Activated CD4-positive, alpha-beta T cell treated with anti-CD3 and anti-CD28 coated beads for 36 hours (primary cell): ENCODE measurements at regions of chr16 and their contacts with region 1.

Region 1: GRCh38 chr16:4271176-4272066 is 1.4 kb downstream of the TFAP4 start:
- DNase-seq: peak; percentile 96
- ATAC-seq: peak; percentile 85
- H3K4me3 Mint-ChIP-seq: peak overlapping the region; percentile 84
- H3K27ac Mint-ChIP-seq: peak overlapping the region; percentile 94
- H3K4me1 Mint-ChIP-seq: peaks cover 12% of the 10 kb centered on the region
- H3K27me3 Mint-ChIP-seq: no peaks in the 10 kb centered on the region

Region 2: GRCh38 chr16:3611146-3611975 is 660.1 kb before region 1 on chr16 and contains the start of gene SLX4:
- CTCF ChIA-PET with region 1: no interaction called
- POLR2A ChIA-PET with region 1: no interaction called
- intact Hi-C with region 1: loop called in 1 of 2 experiments (anchors 1 kb)
- DNase-seq: peak; percentile 95
- ATAC-seq: peak; percentile 90
- H3K4me3 Mint-ChIP-seq: peak within 1 kb of the TSS; percentile 100
- H3K27ac Mint-ChIP-seq: peak within 1 kb of the TSS; percentile 98
- H3K4me1 Mint-ChIP-seq: peaks cover 41% of the 10 kb centered on the region
- H3K27me3 Mint-ChIP-seq: no peaks in the 10 kb centered on the region
- total RNA-seq, gene SLX4: 10.7 to 11.7 TPM

Region 3: DNA sequence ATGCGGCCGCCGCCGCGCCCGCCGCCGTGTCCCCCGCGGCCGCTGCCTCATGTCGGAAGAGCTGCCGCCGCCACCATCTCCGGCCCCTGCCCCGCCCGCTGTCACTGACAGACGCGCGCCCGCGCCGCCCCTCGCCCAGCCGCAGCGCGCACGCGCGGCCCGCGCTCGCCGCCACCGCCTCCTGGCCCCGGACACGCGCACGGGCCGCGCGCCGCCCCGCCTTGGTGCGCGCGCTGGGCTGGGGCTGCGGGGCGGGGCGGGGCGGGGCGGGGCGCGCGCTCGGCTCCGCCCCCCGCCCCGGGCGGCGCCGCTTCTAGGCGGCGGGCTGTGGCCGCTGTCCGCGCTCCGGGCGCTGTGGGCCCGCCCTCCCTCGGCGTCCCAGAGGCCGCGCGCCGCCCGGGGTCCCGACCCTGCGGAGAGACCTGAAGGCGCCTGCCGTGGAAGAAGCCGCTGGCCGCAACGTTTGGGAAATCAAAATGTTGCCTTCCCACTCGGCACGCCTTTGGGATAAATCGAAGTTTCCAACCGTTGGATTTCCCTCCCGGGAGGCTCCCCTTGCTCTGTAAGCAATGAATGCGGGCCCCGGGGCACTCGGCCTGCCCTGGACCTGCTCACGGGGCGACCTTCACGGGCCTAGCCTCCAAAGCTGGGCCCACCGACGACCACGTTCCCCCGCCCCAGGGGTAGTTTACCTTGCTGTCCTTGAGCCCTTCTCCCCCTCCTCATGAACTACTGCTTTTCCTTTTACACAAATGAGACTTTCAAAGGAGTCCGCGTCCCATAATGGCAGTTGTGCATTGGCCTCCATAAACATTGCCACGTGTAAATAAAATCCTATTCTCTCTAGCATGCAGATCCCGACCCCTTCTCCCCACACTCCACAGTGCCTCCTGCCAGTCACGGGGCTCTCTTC is 154.8 kb before region 1 on chr16 and contains the start of gene ADCY9:
- CTCF ChIA-PET with region 1: no interaction called
- POLR2A ChIA-PET with region 1: no interaction called
- intact Hi-C with region 1: loop called in 1 of 2 experiments (anchors 1 kb)
- DNase-seq: peak; percentile 86
- ATAC-seq: peak; percentile 75
- H3K4me3 Mint-ChIP-seq: peak within 1 kb of the TSS; percentile 78
- H3K27ac Mint-ChIP-seq: peak within 1 kb of the TSS; percentile 78
- H3K4me1 Mint-ChIP-seq: peaks cover 36% of the 10 kb centered on the region
- H3K27me3 Mint-ChIP-seq: peaks cover 7% of the 10 kb centered on the region
- total RNA-seq, gene ADCY9: 5.3 to 6.2 TPM

Region 4: GRCh38 chr16:4330277-4330874 is 59.0 kb after region 1 on chr16:
- CTCF ChIA-PET with region 1: interaction called, 4 read pairs
- POLR2A ChIA-PET with region 1: no interaction called
- intact Hi-C with region 1: loop called in 1 of 2 experiments (anchors 5 kb)
- DNase-seq: peak; percentile 86
- ATAC-seq: peak; percentile 80
- H3K4me3 Mint-ChIP-seq: no peak overlapping the region
- H3K27ac Mint-ChIP-seq: no peak overlapping the region
- H3K4me1 Mint-ChIP-seq: no peaks in the 10 kb centered on the region
- H3K27me3 Mint-ChIP-seq: no peaks in the 10 kb centered on the region

Region 5: GRCh38 chr16:4416200-4417032 is 145.0 kb after region 1 on chr16 and contains the start of gene CORO7:
- CTCF ChIA-PET with region 1: no interaction called
- POLR2A ChIA-PET with region 1: no interaction called
- intact Hi-C with region 1: loop called in 1 of 2 experiments (anchors 1 kb)
- DNase-seq: peak; percentile 98
- ATAC-seq: peak; percentile 81
- H3K4me3 Mint-ChIP-seq: peak within 1 kb of the TSS; percentile 86
- H3K27ac Mint-ChIP-seq: peak within 1 kb of the TSS; percentile 84
- H3K4me1 Mint-ChIP-seq: peaks cover 29% of the 10 kb centered on the region
- H3K27me3 Mint-ChIP-seq: no peaks in the 10 kb centered on the region
- total RNA-seq, gene CORO7: 65.0 to 67.1 TPM

Region 6: DNA sequence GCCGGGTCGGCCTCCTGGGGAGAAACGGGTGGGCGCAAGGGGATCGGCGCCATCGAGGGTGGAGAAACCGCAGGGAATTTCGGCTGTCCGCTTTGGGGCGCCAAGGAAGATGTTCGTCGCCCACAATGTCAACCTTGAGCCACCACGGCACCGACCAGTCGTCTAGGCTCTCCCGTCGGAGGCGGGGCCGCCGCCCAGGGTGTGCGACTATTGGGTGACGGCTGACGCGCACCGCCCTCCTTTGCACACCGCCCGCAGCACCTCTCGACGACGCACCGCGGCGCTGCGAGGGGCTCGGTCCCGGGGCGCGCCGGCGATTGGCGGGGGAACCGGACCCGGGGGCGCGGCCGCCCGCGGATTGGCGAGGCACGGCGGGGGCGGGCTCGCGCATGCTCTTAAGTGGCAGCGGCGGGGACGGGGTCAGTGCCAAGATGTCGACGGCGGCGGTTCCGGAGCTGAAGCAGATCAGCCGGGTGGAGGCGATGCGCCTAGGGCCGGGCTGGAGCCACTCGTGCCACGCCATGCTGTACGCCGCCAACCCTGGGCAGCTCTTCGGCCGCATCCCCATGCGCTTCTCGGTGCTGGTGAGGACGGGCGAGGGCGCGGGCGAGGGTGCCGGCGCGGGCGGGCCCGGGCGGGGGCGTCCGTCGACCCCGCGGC is 422.0 kb after region 1 on chr16 and contains the start of gene NUDT16L1:
- CTCF ChIA-PET with region 1: no interaction called
- POLR2A ChIA-PET with region 1: no interaction called
- intact Hi-C with region 1: loop called in 1 of 2 experiments (anchors 2 kb)
- DNase-seq: peak; percentile 98
- ATAC-seq: peak; percentile 95
- H3K4me3 Mint-ChIP-seq: peak within 1 kb of the TSS; percentile 77
- H3K27ac Mint-ChIP-seq: peak within 1 kb of the TSS; percentile 83
- H3K4me1 Mint-ChIP-seq: peaks cover 17% of the 10 kb centered on the region
- H3K27me3 Mint-ChIP-seq: no peaks in the 10 kb centered on the region
- total RNA-seq, gene NUDT16L1: 16.4 to 22.5 TPM